ENCODE measurements at regions of chr15 and their contacts with region 1.

Region 1: GRCh38 chr15:65054333-65055200 is 9.4 kb downstream of the SLC51B start:
- DNase-seq: peak; percentile 80 to 85 (median 85)
- ATAC-seq: peak; percentile 80 to 90 (median 84)
- H3K4me3 ChIP-seq: no peak overlapping the region
- H3K27ac ChIP-seq: peak overlapping the region; percentile 4 to 85 (median 33)
- H3K4me1 ChIP-seq: peaks cover 0 to 31% (median 7%) of the 10 kb centered on the region in 4 donors
- H3K27me3 ChIP-seq: no peaks in the 10 kb centered on the region
- CTCF ChIP-seq: peak; percentile 87 to 97 (median 96)
- POLR2A ChIP-seq: no peak

Region 2: GRCh38 chr15:64841258-64842095 is 213.1 kb before region 1 on chr15 and contains the start of gene PLEKHO2:
- intact Hi-C with region 1: no loop called
- DNase-seq: peak; percentile 91 to 97 (median 94)
- ATAC-seq: peak; percentile 81 to 89 (median 86)
- H3K4me3 ChIP-seq: peak within 1 kb of the TSS; percentile 74 to 87 (median 75)
- H3K27ac ChIP-seq: peak within 1 kb of the TSS; percentile 80 to 90 (median 81)
- H3K4me1 ChIP-seq: peaks cover 0 to 6% (median 1%) of the 10 kb centered on the region in 4 donors
- H3K27me3 ChIP-seq: no peaks in the 10 kb centered on the region
- CTCF ChIP-seq: peak in 2 of 4 donors; percentile 3 to 6
- POLR2A ChIP-seq: peak; percentile 71
- total RNA-seq, gene PLEKHO2: 3.9 to 11.8 (median 5.2) TPM

Region 3: DNA sequence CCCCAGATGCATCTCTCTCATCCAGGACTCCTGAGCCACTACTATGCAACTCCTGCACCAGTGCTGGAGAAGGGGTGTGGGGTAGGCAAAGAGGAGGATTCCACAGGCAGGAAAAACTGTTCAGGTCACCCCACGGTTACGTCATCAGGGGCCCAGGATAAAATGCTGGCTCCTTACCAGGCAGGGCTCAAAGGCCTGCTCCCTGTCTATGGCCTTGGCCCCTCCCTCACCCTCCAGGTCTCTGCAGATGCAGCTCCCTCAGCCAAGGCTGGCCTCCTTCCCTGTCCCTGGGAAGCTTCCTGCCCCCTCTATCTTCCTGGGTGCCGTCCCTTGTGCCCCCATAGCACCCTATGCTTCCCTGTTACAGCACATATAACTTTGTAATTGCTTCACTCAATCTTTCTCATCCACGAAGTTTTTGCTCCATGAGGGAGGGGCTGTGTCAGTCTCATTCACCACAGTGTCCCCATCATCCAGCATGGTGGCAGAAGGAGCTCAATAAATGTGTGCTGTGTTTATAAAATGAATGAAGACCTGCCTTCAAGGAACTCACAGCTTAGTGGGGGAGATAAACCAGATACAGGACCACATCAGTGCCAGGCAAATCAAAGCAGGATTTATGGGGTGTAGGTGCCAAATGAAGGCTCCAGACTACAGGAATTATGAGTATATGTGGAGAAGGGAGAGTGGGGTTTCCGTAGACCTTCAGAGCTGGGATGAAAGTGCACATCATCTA is 40.6 kb after region 1 on chr15:
- intact Hi-C with region 1: loop called (anchors 5 kb)
- DNase-seq: peak in 2 of 3 donors; percentile 63 to 76
- ATAC-seq: peak; percentile 49 to 68 (median 55)
- H3K4me3 ChIP-seq: no peak overlapping the region
- H3K27ac ChIP-seq: peak overlapping the region in 1 of 3 donors; percentile 71
- H3K4me1 ChIP-seq: peaks cover 0 to 24% (median 8%) of the 10 kb centered on the region in 4 donors
- H3K27me3 ChIP-seq: no peaks in the 10 kb centered on the region
- CTCF ChIP-seq: no peak
- POLR2A ChIP-seq: no peak

Region 4: GRCh38 chr15:65101411-65101890 is 46.9 kb after region 1 on chr15:
- intact Hi-C with region 1: loop called (anchors 5 kb)
- DNase-seq: peak in 2 of 3 donors; percentile 67 to 77
- ATAC-seq: peak; percentile 74 to 94 (median 82)
- H3K4me3 ChIP-seq: no peak overlapping the region
- H3K27ac ChIP-seq: no peak overlapping the region
- H3K4me1 ChIP-seq: no peaks in the 10 kb centered on the region
- H3K27me3 ChIP-seq: no peaks in the 10 kb centered on the region
- CTCF ChIP-seq: peak; percentile 74 to 88 (median 80)
- POLR2A ChIP-seq: no peak

Measured in right lobe of liver (tissue), 6 donors.